GM23248 (cell line): ENCODE measurements at regions of chr15 and their contacts with region 1.

Region 1: GRCh38 chr15:87477793-87478686 is 778.5 kb downstream of the NTRK3 start:
- DNase-seq: peak; percentile 74
- H3K4me3 ChIP-seq: no peak overlapping the region
- H3K27ac ChIP-seq: no peak overlapping the region
- H3K4me1 ChIP-seq: no peaks in the 10 kb centered on the region
- H3K27me3 ChIP-seq: no peaks in the 10 kb centered on the region

Region 2: GRCh38 chr15:85858586-85859375 is 1619.3 kb before region 1 on chr15:
- in situ Hi-C with region 1: loop called (anchors 25 kb)
- DNase-seq: peak; percentile 74
- H3K4me3 ChIP-seq: no peak overlapping the region
- H3K27ac ChIP-seq: no peak overlapping the region
- H3K4me1 ChIP-seq: no peaks in the 10 kb centered on the region
- H3K27me3 ChIP-seq: peaks cover 11% of the 10 kb centered on the region